Activated naive CD4-positive, alpha-beta T cell treated with anti-CD3 and anti-CD28 coated beads for 36 hours (primary cell): ENCODE measurements at regions of chr4 and their contacts with region 1.

Region 1: DNA sequence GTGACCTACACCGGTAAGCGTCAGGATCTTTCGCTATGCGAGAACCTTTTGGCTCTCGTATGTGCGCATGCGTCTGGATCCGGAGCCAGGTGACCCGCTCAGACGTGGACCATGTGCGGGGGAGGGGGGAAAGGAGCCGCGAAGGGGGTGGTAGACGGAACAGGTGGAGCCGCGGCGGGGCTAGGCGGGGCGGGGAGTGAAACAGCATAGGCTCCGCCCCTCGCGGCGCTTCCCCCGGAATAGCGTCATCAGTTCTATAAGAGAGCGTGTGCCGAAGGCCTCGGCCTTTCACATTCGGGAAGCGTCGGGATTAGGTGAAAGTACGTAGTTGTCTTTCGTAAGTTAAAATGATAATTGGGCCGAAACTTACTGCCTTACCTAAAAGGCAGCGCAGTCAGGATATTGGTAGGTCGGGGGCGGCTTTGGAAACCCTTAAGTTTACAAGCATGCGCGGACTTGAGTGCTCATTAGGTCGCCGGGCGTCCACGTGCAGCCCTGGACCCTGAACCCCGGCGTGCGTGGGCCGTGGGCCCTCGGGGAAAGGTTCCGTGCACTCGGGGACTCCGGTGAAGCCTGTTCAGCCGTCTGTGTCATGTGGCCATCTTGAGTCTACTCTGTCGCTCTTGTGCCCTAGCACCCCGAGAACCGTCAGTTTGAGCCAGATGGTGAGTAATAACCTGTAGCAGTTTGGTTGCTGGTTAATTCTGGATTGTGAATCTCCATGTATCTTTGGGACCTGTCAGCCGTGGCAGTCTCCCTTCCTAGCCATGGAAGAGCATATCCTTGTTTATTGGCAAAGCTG is 74.1 kb downstream of the PRSS12 start:
- DNase-seq: peak; percentile 99
- H3K4me3 Mint-ChIP-seq: peak overlapping the region; percentile 87
- H3K27ac Mint-ChIP-seq: peak overlapping the region; percentile 98
- H3K4me1 Mint-ChIP-seq: peaks cover 24% of the 10 kb centered on the region
- H3K27me3 Mint-ChIP-seq: no peaks in the 10 kb centered on the region

Region 2: GRCh38 chr4:118381902-118382301 is 103.2 kb after region 1 on chr4:
- CTCF ChIA-PET with region 1: no interaction called
- intact Hi-C with region 1: no loop called
- DNase-seq: no peak
- H3K4me3 Mint-ChIP-seq: no peak overlapping the region
- H3K27ac Mint-ChIP-seq: no peak overlapping the region
- H3K4me1 Mint-ChIP-seq: no peaks in the 10 kb centered on the region
- H3K27me3 Mint-ChIP-seq: peaks cover 9% of the 10 kb centered on the region

Region 3: GRCh38 chr4:118586357-118586790 is 307.7 kb after region 1 on chr4:
- CTCF ChIA-PET with region 1: no interaction called
- intact Hi-C with region 1: loop called (anchors 1 kb)
- DNase-seq: no peak
- H3K4me3 Mint-ChIP-seq: no peak overlapping the region
- H3K27ac Mint-ChIP-seq: no peak overlapping the region
- H3K4me1 Mint-ChIP-seq: peaks cover 16% of the 10 kb centered on the region
- H3K27me3 Mint-ChIP-seq: peaks cover 23% of the 10 kb centered on the region

Region 4: GRCh38 chr4:118835571-118836300 is 557.1 kb after region 1 on chr4 and contains the start of gene SEC24D:
- CTCF ChIA-PET with region 1: no interaction called
- intact Hi-C with region 1: loop called (anchors 1 kb)
- DNase-seq: peak; percentile 78
- H3K4me3 Mint-ChIP-seq: peak within 1 kb of the TSS; percentile 100
- H3K27ac Mint-ChIP-seq: peak within 1 kb of the TSS; percentile 99
- H3K4me1 Mint-ChIP-seq: peaks cover 15% of the 10 kb centered on the region
- H3K27me3 Mint-ChIP-seq: no peaks in the 10 kb centered on the region
- total RNA-seq, gene SEC24D: 28.4 to 29.7 TPM

Region 5: GRCh38 chr4:118888666-118889311 is 610.1 kb after region 1 on chr4 and contains the start of gene SYNPO2:
- CTCF ChIA-PET with region 1: no interaction called
- intact Hi-C with region 1: loop called (anchors 1 kb)
- DNase-seq: peak; percentile 43
- H3K4me3 Mint-ChIP-seq: peak within 1 kb of the TSS; percentile 70
- H3K27ac Mint-ChIP-seq: no peak within 1 kb of the TSS
- H3K4me1 Mint-ChIP-seq: peaks cover 14% of the 10 kb centered on the region
- H3K27me3 Mint-ChIP-seq: peaks cover 30% of the 10 kb centered on the region
- total RNA-seq, gene SYNPO2: 0.14 TPM in 1 of 2 experiments, not detected in the other